Tibial artery (tissue), 4 donors: ENCODE measurements at regions of chr1 and their contacts with region 1.

Region 1: GRCh38 chr1:109790735-109791494 is 27.2 kb upstream of the EPS8L3 start:
- DNase-seq: peak; percentile 46 to 74
- H3K4me3 ChIP-seq: no peak overlapping the region
- H3K27ac ChIP-seq: peak overlapping the region in 1 of 2 donors; percentile 1
- H3K4me1 ChIP-seq: peaks cover 0 to 61% (median 31%) of the 10 kb centered on the region in 4 donors
- H3K27me3 ChIP-seq: no peaks in the 10 kb centered on the region
- CTCF ChIP-seq: peak in 1 of 2 experiments; percentile 14

Region 2: GRCh38 chr1:109910123-109910962 is 119.4 kb after region 1 on chr1 and contains the start of gene CSF1:
- intact Hi-C with region 1: loop called (anchors 10 kb)
- DNase-seq: peak; percentile 86 to 88
- H3K4me3 ChIP-seq: peak within 1 kb of the TSS; percentile 72 to 76
- H3K27ac ChIP-seq: peak within 1 kb of the TSS; percentile 79 to 83
- H3K4me1 ChIP-seq: peaks cover 0 to 49% (median 37%) of the 10 kb centered on the region in 4 donors
- H3K27me3 ChIP-seq: no peaks in the 10 kb centered on the region
- CTCF ChIP-seq: no peak